ENCODE measurements at regions of chr5 and their contacts with region 1.

Region 1: DNA sequence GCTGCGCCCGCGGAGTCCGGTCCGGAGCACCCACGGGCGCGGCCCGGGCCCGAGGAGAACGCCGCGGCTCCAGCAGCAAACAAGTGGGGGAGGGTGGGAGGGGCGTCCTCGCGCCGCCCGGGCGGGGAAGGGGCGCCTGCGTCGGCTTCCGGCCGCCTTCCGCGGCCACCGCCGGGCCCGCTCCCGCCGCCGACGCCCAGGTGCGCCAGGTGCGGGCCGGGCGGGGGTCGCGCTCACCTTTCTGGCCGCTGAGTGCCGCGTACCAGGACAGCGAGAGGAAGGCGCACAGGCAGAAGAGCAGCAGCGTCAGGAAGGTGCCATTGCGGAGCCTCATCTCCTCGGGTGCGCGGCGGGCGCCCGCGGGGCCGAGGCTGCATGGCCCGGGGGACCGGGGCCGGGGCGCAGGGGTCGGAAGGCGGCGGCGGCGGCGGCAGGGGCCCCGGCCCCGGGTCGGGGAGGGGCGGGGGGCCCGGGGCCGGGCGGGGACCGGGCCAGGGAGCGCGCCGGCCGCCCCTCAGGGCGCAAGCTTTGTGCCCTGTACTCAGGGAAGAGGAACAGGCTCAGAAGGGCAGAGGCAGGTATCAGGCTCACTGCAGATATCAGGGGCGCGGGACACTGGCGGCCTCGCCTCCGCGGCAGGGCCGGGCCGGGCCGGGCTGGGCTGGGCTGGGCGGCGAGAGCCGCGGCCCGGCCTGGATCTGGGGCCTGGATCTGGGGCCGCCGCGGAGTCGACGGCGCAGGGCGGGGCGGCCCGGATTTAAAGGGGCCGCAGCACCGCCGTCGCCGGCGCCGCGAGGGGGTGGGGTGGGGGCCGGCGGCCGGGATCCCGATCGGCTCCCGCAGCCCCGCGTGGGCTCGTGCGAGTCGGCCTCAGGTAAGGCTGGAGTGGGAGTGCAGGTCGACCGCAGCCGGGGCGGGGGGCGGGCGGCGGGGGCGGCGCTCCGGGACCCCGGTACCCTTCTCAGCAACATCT is at the start of gene MGAT4B:
- DNase-seq: peak in 2 of 3 donors; percentile 74 to 82
- H3K4me3 ChIP-seq: peak within 1 kb of the TSS; percentile 65 to 83 (median 75)
- H3K27ac ChIP-seq: peak within 1 kb of the TSS in 1 of 2 experiments; percentile 64
- H3K4me1 ChIP-seq: peaks cover 4 to 49% (median 41%) of the 10 kb centered on the region in 4 experiments
- H3K27me3 ChIP-seq: no peaks in the 10 kb centered on the region

Region 2: GRCh38 chr5:179821581-179822432 is 15.3 kb after region 1 on chr5:
- CTCF ChIA-PET with region 1: interaction called, 124 read pairs
- POLR2A ChIA-PET with region 1: interaction called, 131 read pairs
- DNase-seq: peak; percentile 90 to 95 (median 94)
- H3K4me3 ChIP-seq: peak overlapping the region; percentile 82 to 96 (median 89)
- H3K27ac ChIP-seq: peak overlapping the region; percentile 92 to 95
- H3K4me1 ChIP-seq: peaks cover 0 to 53% (median 46%) of the 10 kb centered on the region in 4 experiments
- H3K27me3 ChIP-seq: no peaks in the 10 kb centered on the region

Region 3: DNA sequence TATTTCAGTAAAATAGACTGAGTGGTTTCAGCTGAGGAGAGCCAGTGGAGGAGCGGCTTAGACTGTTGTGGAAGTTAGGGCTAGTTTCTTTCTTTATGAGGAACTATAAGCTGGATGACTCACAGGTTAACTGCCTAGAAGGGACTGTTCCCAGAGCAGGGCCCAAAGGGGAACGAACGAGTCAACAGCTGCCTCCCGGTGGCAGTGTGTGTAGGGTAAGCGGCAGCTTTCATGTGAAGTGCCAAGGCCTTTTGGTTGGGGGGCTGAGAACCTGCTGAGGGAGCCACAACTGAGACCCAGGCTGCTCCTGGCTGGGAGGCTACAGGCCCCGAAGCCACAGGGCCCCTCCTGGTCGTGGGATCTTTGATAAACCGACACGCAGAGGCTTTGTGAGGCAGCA is 21.1 kb after region 1 on chr5:
- CTCF ChIA-PET with region 1: interaction called, 124 read pairs
- POLR2A ChIA-PET with region 1: interaction called, 131 read pairs
- DNase-seq: peak; percentile 66 to 92 (median 90)
- H3K4me3 ChIP-seq: no peak overlapping the region
- H3K27ac ChIP-seq: no peak overlapping the region
- H3K4me1 ChIP-seq: peaks cover 0 to 17% (median 7%) of the 10 kb centered on the region in 4 experiments
- H3K27me3 ChIP-seq: no peaks in the 10 kb centered on the region

Region 4: DNA sequence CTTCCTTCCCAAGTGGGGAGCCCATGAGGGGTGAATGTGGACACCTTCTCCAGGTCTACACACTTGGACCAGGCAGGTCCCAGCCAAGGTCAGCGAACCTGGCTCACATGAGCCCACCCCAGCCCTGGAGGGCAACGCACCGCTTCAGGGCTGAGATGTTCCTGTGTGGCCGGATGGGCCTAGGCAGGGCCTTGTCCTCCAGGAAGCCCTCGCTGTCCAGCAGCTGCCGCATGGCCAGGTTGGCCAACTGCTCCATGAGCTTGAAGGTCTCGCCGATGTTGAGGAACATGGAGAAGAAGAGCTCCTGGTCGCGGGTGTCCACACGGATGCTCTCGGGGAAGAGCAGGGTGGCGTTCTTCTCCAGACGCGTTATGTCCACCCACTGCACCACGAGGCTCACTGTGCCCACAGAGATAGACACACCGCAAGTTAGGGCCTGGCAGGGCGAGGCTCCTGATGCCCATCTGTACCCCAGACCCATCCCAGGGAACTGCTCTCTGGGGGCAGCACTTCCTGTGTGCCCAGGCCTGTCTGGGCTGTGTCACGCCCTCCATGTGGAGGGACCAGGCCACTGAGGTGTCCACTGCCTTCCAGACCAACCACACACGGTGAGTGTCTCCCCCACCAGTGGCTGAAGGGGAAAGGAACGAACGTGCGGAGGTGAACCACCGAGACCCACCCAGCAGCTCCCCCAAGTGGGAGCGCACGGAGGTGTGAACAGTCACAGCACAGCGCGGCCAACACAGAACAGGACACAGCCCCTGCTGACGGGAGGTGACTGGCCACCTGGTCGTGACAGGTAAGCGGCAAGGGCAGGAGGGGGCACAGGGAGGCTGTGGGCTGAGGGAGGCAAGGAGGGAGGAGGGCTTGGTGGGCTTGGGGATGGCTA is 86.8 kb after region 1 on chr5:
- CTCF ChIA-PET with region 1: no interaction called
- POLR2A ChIA-PET with region 1: no interaction called
- DNase-seq: no peak
- H3K4me3 ChIP-seq: no peak overlapping the region
- H3K27ac ChIP-seq: no peak overlapping the region
- H3K4me1 ChIP-seq: no peaks in the 10 kb centered on the region
- H3K27me3 ChIP-seq: no peaks in the 10 kb centered on the region